CD4-positive, alpha-beta memory T cell (primary cell): ENCODE measurements at regions of chr19 and their contacts with region 1.

Region 1: GRCh38 chr19:20423381-20424197 is 142.0 kb downstream of the ZNF737 start:
- DNase-seq: peak; percentile 9 to 36 (median 29)
- H3K4me3 ChIP-seq: peak overlapping the region; percentile 78 to 81
- H3K4me3 Mint-ChIP-seq: peak overlapping the region; percentile 91 to 99 (median 97)
- H3K27ac ChIP-seq: peak overlapping the region; percentile 43
- H3K27ac Mint-ChIP-seq: peak overlapping the region; percentile 89 to 98 (median 93)
- H3K4me1 ChIP-seq: no peaks in the 10 kb centered on the region
- H3K4me1 Mint-ChIP-seq: peaks cover 3 to 31% (median 17%) of the 10 kb centered on the region in 4 donors
- H3K27me3 ChIP-seq: no peaks in the 10 kb centered on the region
- H3K27me3 Mint-ChIP-seq: no peaks in the 10 kb centered on the region

Region 2: DNA sequence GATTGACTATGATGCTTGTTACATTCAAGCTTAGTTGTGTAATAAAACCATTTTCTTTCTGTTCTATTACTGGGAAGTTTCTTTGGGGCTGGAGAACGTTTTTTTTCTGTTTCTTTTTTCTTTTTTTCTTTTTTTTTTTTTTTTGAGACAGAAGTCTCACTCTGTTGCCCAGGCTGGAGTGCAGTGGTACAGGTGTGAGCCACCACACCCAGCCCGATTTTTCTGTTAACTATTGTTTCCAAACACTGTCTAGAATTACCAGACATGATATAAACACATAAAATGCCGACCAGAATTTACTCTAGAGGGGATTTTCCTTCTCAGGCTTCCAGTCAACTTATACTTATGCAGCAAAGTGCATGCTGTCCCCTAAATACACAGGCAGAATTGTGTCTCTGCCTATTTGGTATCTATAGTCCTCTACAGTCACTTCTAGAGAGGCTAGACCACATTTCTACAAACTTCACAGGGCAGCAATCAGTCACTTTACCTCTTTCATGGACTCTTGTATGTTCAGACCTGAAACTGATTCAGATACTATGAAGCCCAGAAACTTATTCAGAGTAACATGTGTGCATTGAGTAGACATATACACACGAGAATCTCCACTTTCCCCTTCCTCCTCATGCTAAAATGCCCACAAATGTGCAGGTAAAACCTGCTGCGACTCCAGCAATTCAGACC is 20.8 kb after region 1 on chr19:
- CTCF ChIA-PET with region 1: no interaction called
- POLR2A ChIA-PET with region 1: interaction called, 19 read pairs
- intact Hi-C with region 1: no loop called
- DNase-seq: no peak
- H3K4me3 ChIP-seq: no peak overlapping the region
- H3K4me3 Mint-ChIP-seq: peak overlapping the region in 7 of 8 donors; percentile 26 to 69 (median 44)
- H3K27ac ChIP-seq: no peak overlapping the region
- H3K27ac Mint-ChIP-seq: peak overlapping the region in 5 of 7 donors; percentile 31 to 80 (median 52)
- H3K4me1 ChIP-seq: peaks cover 14% of the 10 kb centered on the region
- H3K4me1 Mint-ChIP-seq: peaks cover 8 to 26% (median 16%) of the 10 kb centered on the region in 4 donors
- H3K27me3 ChIP-seq: no peaks in the 10 kb centered on the region
- H3K27me3 Mint-ChIP-seq: no peaks in the 10 kb centered on the region

Region 3: GRCh38 chr19:20513179-20513934 is 89.8 kb after region 1 on chr19:
- CTCF ChIA-PET with region 1: interaction called, 13 read pairs
- POLR2A ChIA-PET with region 1: interaction called, 8 read pairs
- intact Hi-C with region 1: no loop called
- DNase-seq: peak in 2 of 5 donors; percentile 7 to 12
- H3K4me3 ChIP-seq: no peak overlapping the region
- H3K4me3 Mint-ChIP-seq: no peak overlapping the region
- H3K27ac ChIP-seq: no peak overlapping the region
- H3K27ac Mint-ChIP-seq: peak overlapping the region in 1 of 7 donors; percentile 1
- H3K4me1 ChIP-seq: no peaks in the 10 kb centered on the region
- H3K4me1 Mint-ChIP-seq: peaks cover 0 to 6% (median 0%) of the 10 kb centered on the region in 4 donors
- H3K27me3 ChIP-seq: no peaks in the 10 kb centered on the region
- H3K27me3 Mint-ChIP-seq: no peaks in the 10 kb centered on the region

Region 4: DNA sequence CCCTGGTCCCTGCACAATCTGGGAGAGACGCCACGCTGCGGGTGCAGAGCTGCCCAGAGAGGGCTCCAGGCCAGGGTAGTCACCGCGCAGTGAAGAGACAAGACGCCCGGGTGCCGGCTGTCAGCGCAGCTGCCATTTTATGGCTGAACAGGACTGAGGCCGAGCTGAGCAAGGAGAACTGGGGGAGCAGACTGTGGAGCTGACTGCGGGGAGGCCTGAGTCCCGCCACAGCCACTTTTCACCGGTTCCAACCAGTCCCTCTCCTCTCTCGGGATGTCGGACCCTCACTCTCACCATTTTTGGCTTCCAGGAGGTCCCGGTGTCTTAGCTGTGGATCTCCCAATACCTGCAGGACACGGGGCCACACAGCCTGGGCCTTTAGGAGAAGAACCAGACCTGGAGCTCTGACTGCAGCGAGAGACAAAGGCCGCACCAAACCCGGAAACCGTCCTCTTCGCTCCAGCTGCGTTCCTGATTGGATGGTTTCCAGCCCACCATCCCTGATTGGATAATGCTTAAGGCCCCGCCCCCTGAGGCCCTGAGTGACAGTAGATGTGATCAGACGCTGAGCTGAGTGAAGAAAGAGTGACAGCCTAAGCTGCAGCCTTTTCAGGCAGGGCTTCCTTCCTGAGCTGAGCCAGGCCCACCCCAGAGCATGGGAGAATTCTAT is 237.7 kb after region 1 on chr19 and contains the start of gene ZNF626:
- CTCF ChIA-PET with region 1: interaction called, 4 read pairs
- POLR2A ChIA-PET with region 1: interaction called, 13 read pairs
- intact Hi-C with region 1: loop called (anchors 2 kb)
- DNase-seq: peak; percentile 88 to 95 (median 92)
- H3K4me3 ChIP-seq: peak within 1 kb of the TSS; percentile 36 to 60
- H3K4me3 Mint-ChIP-seq: peak within 1 kb of the TSS; percentile 90 to 98 (median 97)
- H3K27ac ChIP-seq: peak within 1 kb of the TSS; percentile 81
- H3K27ac Mint-ChIP-seq: peak within 1 kb of the TSS; percentile 91 to 98 (median 97)
- H3K4me1 ChIP-seq: peaks cover 12% of the 10 kb centered on the region
- H3K4me1 Mint-ChIP-seq: peaks cover 20 to 73% (median 46%) of the 10 kb centered on the region in 4 donors
- H3K27me3 ChIP-seq: no peaks in the 10 kb centered on the region
- H3K27me3 Mint-ChIP-seq: no peaks in the 10 kb centered on the region
- total RNA-seq, gene ZNF626: 18.6 to 19.8 TPM

Region 5: DNA sequence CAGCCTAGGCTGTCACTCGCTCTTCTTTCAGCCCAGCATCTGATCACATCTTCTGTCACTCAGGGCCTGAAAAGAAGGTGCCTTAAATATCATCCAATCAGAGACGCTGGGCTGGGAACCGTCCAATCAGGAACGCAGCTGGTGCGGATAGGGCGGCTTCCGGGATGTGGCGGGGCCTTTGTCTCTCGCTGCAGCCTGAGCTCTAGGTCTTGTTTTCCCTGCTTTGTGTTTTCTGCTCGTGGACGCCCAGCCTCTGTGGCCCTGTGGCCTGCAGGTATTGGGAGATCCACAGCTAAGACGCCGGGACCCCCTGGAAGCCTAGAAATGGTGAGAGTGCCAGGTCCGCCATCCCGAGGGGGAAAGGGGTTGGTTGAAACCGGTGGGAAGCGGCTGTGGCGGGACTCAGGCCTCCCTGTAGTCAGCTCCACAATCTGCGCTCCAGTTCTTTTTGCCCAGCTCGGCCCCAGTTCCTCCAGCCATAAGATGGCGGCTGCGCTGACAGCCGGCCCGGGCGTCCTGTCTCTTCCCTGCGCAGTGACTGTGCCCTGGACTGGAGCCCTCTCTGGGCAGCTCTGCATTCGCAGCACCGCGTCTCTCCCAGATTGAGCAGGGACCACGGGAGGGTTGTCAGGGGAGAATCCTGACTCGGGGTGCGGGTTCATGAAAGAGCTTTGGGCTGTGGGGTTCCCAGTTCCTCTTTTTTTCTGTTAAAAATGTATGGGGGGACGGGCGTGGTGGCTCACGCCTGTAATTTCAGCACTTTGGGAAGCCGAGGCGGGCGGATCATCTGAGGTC is 499.7 kb after region 1 on chr19 and contains the start of gene ZNF85:
- CTCF ChIA-PET with region 1: no interaction called
- POLR2A ChIA-PET with region 1: interaction called, 6 read pairs
- intact Hi-C with region 1: loop called (anchors 10 kb)
- DNase-seq: peak; percentile 90 to 94 (median 91)
- H3K4me3 ChIP-seq: peak within 1 kb of the TSS; percentile 63 to 81
- H3K4me3 Mint-ChIP-seq: peak within 1 kb of the TSS; percentile 94 to 98 (median 96)
- H3K27ac ChIP-seq: peak within 1 kb of the TSS; percentile 62
- H3K27ac Mint-ChIP-seq: peak within 1 kb of the TSS; percentile 86 to 97 (median 96)
- H3K4me1 ChIP-seq: peaks cover 4% of the 10 kb centered on the region
- H3K4me1 Mint-ChIP-seq: peaks cover 5 to 14% (median 10%) of the 10 kb centered on the region in 4 donors
- H3K27me3 ChIP-seq: no peaks in the 10 kb centered on the region
- H3K27me3 Mint-ChIP-seq: no peaks in the 10 kb centered on the region
- total RNA-seq, gene ZNF85: 6.5 to 7.6 TPM